Heart right ventricle (tissue), 16 donors: ENCODE measurements at regions of chr1 and their contacts with region 1.

Region 1: GRCh38 chr1:95259245-95259644 is 25.2 kb downstream of the RWDD3 start:
- DNase-seq: no peak
- ATAC-seq: no peak
- H3K4me3 ChIP-seq: no peak overlapping the region
- H3K27ac ChIP-seq: no peak overlapping the region
- H3K4me1 ChIP-seq: no peaks in the 10 kb centered on the region
- H3K27me3 ChIP-seq: no peaks in the 10 kb centered on the region
- CTCF ChIP-seq: no peak

Region 2: GRCh38 chr1:95169544-95169943 is 89.7 kb before region 1 on chr1:
- intact Hi-C with region 1: no loop called
- DNase-seq: no peak
- ATAC-seq: no peak
- H3K4me3 ChIP-seq: no peak overlapping the region
- H3K27ac ChIP-seq: no peak overlapping the region
- H3K4me1 ChIP-seq: peaks cover 0 to 22% (median 0%) of the 10 kb centered on the region in 9 donors
- H3K27me3 ChIP-seq: no peaks in the 10 kb centered on the region
- CTCF ChIP-seq: no peak

Region 3: GRCh38 chr1:95282518-95282895 is 23.3 kb after region 1 on chr1:
- intact Hi-C with region 1: loop called in 1 of 10 experiments (anchors 1 kb)
- DNase-seq: no peak
- ATAC-seq: no peak
- H3K4me3 ChIP-seq: no peak overlapping the region
- H3K27ac ChIP-seq: no peak overlapping the region
- H3K4me1 ChIP-seq: no peaks in the 10 kb centered on the region
- H3K27me3 ChIP-seq: no peaks in the 10 kb centered on the region
- CTCF ChIP-seq: no peak